ENCODE measurements at regions of chr11 and their contacts with region 1.

Region 1: GRCh38 chr11:93543292-93543977 is at the start of gene SMCO4:
- DNase-seq: peak; percentile 90
- ATAC-seq: peak; percentile 96
- total RNA-seq, gene SMCO4: 45.3 TPM

Region 2: DNA sequence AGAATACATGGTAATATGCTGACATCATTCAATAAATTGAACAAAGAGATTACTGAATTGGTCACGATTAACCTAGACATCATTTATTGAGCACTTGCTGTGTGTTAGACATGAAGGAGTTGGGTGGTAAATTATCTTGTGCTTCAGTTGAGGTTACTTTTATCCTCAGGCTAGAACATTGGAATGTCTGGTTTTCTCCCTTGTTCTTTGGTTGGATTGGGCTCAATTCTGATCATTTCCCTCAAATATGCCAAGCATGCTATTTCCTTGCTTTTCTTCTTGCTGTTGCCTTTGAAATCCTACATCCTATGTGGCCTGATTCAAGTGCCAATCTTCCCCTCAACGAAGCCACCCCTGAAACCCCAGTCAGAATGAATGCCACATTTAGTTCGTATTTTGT is 147.1 kb before region 1 on chr11:
- intact Hi-C with region 1: loop called (anchors 10 kb)
- DNase-seq: no peak
- ATAC-seq: no peak

Region 3: GRCh38 chr11:93481701-93482100 is 61.7 kb before region 1 on chr11:
- intact Hi-C with region 1: loop called (anchors 2 kb)
- DNase-seq: no peak
- ATAC-seq: peak; percentile 64

Region 4: GRCh38 chr11:93652161-93652597 is 108.7 kb after region 1 on chr11:
- intact Hi-C with region 1: loop called (anchors 5 kb)
- DNase-seq: no peak
- ATAC-seq: no peak

Region 5: GRCh38 chr11:94201004-94201465 is 657.6 kb after region 1 on chr11:
- intact Hi-C with region 1: no loop called
- DNase-seq: no peak
- ATAC-seq: no peak

Measured in Right ventricle myocardium inferior (tissue), 1 donor.